ENCODE measurements at regions of chr5 and their contacts with region 1.

Region 1: DNA sequence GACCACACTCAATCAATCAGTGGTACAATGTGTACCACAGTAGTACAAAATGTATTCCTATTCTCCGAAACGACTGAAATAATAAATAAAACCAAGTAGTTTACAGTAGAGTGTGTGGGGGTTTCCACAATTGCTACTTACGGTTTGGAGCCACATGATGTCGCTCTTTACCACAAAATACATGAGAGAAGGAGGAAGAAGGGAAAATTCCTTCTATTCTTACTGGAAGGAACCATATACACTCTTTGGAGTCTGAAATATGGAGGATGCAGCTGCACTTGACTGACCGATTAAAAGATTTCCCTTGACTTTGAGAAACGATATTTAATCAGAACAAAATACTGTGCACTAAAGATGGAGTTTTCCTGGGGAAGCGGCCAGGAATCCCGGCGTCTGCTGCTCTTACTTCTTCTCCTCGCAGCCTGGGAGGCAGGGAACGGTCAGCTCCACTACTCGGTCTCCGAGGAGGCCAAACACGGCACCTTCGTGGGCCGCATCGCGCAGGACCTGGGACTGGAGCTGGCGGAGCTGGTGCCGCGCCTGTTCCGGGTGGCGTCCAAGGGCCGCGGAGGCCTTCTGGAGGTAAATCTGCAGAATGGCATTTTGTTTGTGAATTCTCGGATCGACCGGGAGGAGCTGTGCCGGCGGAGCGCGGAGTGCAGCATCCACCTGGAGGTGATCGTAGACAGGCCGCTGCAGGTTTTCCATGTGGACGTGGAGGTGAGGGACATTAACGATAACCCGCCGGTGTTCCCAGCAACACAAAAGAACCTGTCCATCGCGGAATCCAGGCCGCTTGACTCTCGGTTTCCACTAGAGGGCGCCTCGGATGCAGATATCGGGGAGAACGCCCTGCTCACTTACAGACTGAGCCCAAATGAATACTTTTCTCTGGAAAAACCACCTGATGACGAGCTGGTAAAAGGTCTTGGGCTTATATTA is at the start of gene PCDHA4:
- DNase-seq: peak; percentile 90
- ATAC-seq: peak; percentile 89
- H3K4me3 Mint-ChIP-seq: peak within 1 kb of the TSS; percentile 92
- H3K27ac Mint-ChIP-seq: peak within 1 kb of the TSS; percentile 36; the same call in 1 of the 2 replicates
- H3K4me1 Mint-ChIP-seq: peaks cover 7% of the 10 kb centered on the region
- H3K27me3 Mint-ChIP-seq: no peaks in the 10 kb centered on the region
- CTCF ChIP-seq: peak; percentile 80
- total RNA-seq, gene PCDHA4: 5.4 to 6.3 TPM (median 5.6 TPM) in 3 replicates

Region 2: GRCh38 chr5:140795259-140795641 is 11.9 kb before region 1 on chr5:
- CTCF ChIA-PET with region 1: interaction called, 48 read pairs
- POLR2A ChIA-PET with region 1: no interaction called
- DNase-seq: no peak
- ATAC-seq: peak; percentile 88
- H3K4me3 Mint-ChIP-seq: peak overlapping the region; percentile 87
- H3K27ac Mint-ChIP-seq: 0 out of 2 replicates have a peak overlapping the region, but pooled peaks have one; percentile 27
- H3K4me1 Mint-ChIP-seq: peaks cover 4% of the 10 kb centered on the region; the same call in 1 of the 2 replicates
- H3K27me3 Mint-ChIP-seq: no peaks in the 10 kb centered on the region
- CTCF ChIP-seq: no peak

Region 3: DNA sequence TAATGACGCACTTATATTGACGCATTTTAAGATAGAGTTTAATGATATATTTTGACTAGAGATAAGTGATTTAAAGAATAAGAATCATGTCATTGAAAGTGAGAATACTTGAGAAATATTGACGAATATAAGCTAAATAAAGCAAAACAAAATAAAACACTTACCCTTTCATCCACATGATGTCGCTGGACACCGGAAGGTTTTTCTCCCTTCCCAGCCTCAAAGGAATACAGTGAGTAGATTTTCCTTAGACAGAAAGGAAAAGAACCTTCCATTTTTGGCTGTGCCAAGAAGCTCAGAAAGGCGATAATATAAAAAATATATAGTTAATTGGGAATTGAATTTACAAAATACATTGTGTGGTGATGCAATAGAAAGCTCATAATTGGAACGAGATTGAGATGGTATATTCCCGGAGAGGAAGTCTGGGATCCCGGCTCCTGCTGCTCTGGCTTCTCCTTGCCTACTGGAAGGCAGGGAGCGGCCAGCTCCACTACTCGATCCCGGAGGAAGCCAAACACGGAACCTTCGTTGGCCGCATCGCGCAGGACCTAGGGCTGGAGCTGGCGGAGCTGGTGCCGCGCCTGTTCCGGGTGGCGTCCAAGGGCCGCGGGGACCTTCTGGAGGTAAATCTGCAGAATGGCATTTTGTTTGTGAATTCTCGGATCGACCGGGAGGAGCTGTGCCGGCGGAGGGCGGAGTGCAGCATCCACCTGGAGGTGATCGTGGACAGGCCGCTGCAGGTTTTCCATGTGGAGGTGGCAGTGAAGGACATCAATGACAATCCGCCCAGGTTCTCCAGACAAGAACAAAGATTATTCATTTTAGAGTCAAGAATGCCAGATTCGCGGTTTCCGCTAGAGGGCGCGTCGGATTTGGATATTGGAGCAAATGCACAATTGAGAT is 14.5 kb after region 1 on chr5 and contains the start of gene PCDHA5:
- CTCF ChIA-PET with region 1: interaction called, 61 read pairs
- POLR2A ChIA-PET with region 1: no interaction called
- DNase-seq: no peak
- ATAC-seq: no peak
- H3K4me3 Mint-ChIP-seq: peak within 1 kb of the TSS; percentile 30; the same call in 1 of the 2 replicates
- H3K27ac Mint-ChIP-seq: no peak within 1 kb of the TSS
- H3K4me1 Mint-ChIP-seq: no peaks in the 10 kb centered on the region
- H3K27me3 Mint-ChIP-seq: no peaks in the 10 kb centered on the region
- CTCF ChIP-seq: no peak
- total RNA-seq, gene PCDHA5: 0.85 to 0.94 TPM (median 0.90 TPM) in 3 replicates

Region 4: GRCh38 chr5:140827704-140828361 is 20.7 kb after region 1 on chr5 and contains the start of gene PCDHA6:
- CTCF ChIA-PET with region 1: interaction called, 61 read pairs
- POLR2A ChIA-PET with region 1: no interaction called
- DNase-seq: no peak
- ATAC-seq: peak; percentile 24; the same call in 1 of the 2 replicates
- H3K4me3 Mint-ChIP-seq: peak within 1 kb of the TSS; percentile 74
- H3K27ac Mint-ChIP-seq: no peak within 1 kb of the TSS
- H3K4me1 Mint-ChIP-seq: peaks cover 4% of the 10 kb centered on the region; the same call in 1 of the 2 replicates
- H3K27me3 Mint-ChIP-seq: no peaks in the 10 kb centered on the region
- CTCF ChIP-seq: no peak
- total RNA-seq, gene PCDHA6: 2.0 to 2.4 TPM (median 2.4 TPM) in 3 replicates

Region 5: GRCh38 chr5:140868721-140869554 is 61.8 kb after region 1 on chr5 and contains the start of gene PCDHA11:
- CTCF ChIA-PET with region 1: interaction called, 14 read pairs
- POLR2A ChIA-PET with region 1: no interaction called
- DNase-seq: no peak
- ATAC-seq: peak; percentile 93
- H3K4me3 Mint-ChIP-seq: peak within 1 kb of the TSS; percentile 88
- H3K27ac Mint-ChIP-seq: peak within 1 kb of the TSS; percentile 78
- H3K4me1 Mint-ChIP-seq: peaks cover 16% of the 10 kb centered on the region
- H3K27me3 Mint-ChIP-seq: no peaks in the 10 kb centered on the region
- CTCF ChIP-seq: no peak
- total RNA-seq, gene PCDHA11: 5.8 to 8.7 TPM (median 7.9 TPM) in 3 replicates